Ascending aorta (tissue), 2 donors: ENCODE measurements at regions of chr3 and their contacts with region 1.

Region 1: DNA sequence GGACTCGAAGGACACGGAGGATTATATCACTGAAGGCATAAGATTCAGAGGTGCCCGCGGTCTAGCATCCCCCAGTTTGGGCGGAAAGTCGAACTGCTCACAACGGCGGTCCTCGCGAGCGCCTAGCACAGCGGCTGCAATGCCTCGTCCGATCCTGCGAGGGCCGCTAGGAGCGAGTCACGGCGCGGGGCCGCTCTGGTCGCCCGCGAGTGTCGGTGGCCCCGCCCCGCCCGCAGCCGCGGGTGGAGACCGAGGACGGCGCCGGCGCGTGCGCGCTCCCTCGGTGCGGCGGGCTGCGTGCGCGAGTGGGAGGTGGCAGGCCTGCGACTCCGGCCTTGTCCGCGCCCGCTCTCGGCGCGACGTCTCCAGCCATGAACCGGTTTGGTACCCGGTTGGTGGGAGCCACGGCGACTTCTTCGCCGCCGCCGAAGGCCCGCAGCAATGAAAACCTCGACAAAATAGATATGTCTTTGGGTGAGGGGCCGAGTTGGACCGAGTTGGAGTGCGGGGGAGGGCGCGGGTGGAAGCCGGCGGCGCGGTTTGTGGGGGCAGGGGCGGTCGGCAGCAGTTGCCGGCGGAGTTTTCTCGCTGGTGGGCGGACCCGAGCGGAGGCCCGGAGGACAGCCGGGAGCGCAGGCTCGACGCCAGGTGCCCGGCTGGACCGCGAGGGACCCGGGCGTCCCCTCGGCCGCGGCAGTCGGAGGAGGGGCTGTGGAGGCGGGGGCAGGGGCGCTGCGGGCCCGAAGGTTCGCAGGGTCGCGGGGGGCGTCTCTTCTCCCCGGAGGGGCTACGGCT is at the start of gene FYTTD1:
- DNase-seq: peak; percentile 60 to 94
- H3K4me3 ChIP-seq: peak within 1 kb of the TSS; percentile 74 to 95
- H3K27ac ChIP-seq: peak within 1 kb of the TSS; percentile 96 to 100
- H3K4me1 ChIP-seq: peaks cover 0 to 17% of the 10 kb centered on the region in 2 donors
- H3K27me3 ChIP-seq: no peaks in the 10 kb centered on the region
- CTCF ChIP-seq: peak; percentile 48 to 73 (median 60)
- total RNA-seq, gene FYTTD1: 14.0 TPM

Region 2: DNA sequence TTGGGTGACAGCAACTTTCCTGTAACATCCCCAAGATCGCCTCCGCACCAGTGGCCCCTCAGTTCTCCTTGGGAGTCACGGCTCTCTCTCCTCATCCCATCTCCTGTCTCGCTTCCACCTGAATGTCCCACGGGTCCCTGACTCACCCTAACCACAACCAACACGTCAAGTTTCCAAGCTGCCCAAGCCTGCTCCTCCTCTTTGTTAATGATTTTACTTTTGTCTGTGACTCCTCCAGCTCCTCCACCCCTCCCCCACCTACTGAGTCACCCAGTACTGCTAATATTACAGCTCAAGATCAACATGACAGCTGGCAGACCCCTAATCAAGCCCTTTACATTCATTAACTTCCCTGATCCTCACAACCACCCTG is 233.3 kb before region 1 on chr3:
- intact Hi-C with region 1: no loop called
- DNase-seq: no peak
- H3K4me3 ChIP-seq: no peak overlapping the region
- H3K27ac ChIP-seq: no peak overlapping the region
- H3K4me1 ChIP-seq: no peaks in the 10 kb centered on the region
- H3K27me3 ChIP-seq: no peaks in the 10 kb centered on the region
- CTCF ChIP-seq: no peak

Region 3: DNA sequence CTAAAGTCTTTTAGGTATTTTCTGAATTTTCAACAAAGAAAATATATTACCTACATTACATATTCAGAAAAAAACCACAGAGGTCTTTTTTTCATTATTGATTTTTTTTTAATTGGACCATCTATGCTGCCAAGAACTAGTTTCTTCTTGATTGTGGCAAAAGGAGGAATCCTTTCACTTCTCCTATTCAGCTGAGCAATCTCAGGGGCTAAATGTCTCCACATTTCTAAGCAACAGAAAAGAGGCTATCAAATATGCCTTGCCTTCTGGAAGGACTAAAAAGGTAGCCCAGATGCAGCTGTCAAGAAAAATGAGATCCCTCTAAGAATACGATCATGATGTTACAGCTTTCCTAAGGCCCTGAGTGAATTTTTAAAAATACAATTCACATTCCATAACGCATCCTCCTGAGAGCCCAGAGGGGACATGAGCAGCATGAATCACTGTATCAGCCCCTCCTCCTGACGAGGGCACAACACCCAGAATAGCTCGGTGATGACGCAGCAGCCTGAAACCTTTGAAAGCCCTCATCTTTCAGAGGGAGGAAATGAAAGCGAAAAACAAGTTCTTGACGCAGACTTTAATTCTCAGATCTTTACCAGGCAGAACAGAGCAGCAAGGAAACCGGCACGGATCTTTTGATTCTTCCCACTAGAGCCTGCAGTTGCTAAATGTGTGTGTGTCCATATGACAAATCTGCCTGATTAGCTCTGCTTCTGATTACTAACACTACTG is 37.7 kb before region 1 on chr3:
- intact Hi-C with region 1: loop called (anchors 2 kb)
- DNase-seq: peak; percentile 79 to 95
- H3K4me3 ChIP-seq: peak overlapping the region; percentile 52 to 60
- H3K27ac ChIP-seq: peak overlapping the region; percentile 93
- H3K4me1 ChIP-seq: peaks cover 11 to 14% of the 10 kb centered on the region in 2 donors
- H3K27me3 ChIP-seq: no peaks in the 10 kb centered on the region
- CTCF ChIP-seq: no peak